Activated CD4-positive, alpha-beta memory T cell treated with anti-CD3 and anti-CD28 coated beads, Interleukin-2, amount 10 ng/mL, durations not matched to agents 7 days and 5 days (primary cell): ENCODE measurements at regions of chr10 and their contacts with region 1.

Region 1: GRCh38 chr10:86971232-86971991 is 3.1 kb downstream of the ADIRF start:
- DNase-seq: peak; percentile 88
- H3K4me3 Mint-ChIP-seq: peak overlapping the region; percentile 72
- H3K27ac Mint-ChIP-seq: peak overlapping the region; percentile 52
- H3K4me1 Mint-ChIP-seq: peaks cover 35% of the 10 kb centered on the region
- H3K27me3 Mint-ChIP-seq: peaks cover 35% of the 10 kb centered on the region

Region 2: DNA sequence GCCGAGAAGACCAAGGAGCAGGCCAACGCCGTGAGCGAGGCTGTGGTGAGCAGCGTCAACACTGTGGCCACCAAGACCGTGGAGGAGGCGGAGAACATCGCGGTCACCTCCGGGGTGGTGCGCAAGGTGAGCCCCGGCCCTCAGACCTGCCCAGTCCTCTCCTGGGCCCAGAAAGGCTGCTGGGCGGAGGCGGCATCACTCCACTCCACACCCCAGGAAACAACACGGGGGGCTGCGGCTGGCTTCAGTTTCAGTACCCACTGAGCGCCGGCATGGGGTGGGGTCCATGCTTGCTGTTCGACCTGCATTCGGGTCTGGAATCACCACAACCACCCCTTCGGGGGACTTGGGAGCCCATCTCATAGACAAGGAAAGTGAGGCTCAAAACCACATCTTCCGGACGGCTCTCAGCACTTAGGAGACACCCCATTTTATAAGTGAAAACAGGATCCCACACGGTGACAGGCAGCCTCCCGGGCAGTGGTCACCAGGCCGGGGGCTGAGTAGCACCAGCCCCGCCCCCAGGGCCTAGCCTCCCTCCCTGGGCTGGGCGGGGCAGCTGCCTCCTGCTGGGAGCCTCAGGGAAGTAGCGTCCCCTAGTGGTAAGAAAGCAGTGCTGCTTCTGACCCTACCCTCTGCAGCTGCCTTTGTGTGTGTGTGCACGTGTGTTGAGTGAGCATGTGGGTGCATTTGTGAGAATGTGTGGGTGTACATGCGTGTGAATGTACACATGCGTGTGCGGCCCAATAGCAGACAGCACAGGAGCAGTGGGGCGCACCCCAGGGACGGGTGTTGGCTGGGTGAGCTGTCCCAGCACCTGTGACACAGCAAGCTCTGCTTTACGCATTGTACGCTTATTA is 11.2 kb before region 1 on chr10:
- CTCF ChIA-PET with region 1: interaction called, 12 read pairs
- POLR2A ChIA-PET with region 1: interaction called, 7 read pairs
- DNase-seq: peak; percentile 62
- H3K4me3 Mint-ChIP-seq: no peak overlapping the region
- H3K27ac Mint-ChIP-seq: no peak overlapping the region
- H3K4me1 Mint-ChIP-seq: peaks cover 3% of the 10 kb centered on the region
- H3K27me3 Mint-ChIP-seq: no peaks in the 10 kb centered on the region

Region 3: DNA sequence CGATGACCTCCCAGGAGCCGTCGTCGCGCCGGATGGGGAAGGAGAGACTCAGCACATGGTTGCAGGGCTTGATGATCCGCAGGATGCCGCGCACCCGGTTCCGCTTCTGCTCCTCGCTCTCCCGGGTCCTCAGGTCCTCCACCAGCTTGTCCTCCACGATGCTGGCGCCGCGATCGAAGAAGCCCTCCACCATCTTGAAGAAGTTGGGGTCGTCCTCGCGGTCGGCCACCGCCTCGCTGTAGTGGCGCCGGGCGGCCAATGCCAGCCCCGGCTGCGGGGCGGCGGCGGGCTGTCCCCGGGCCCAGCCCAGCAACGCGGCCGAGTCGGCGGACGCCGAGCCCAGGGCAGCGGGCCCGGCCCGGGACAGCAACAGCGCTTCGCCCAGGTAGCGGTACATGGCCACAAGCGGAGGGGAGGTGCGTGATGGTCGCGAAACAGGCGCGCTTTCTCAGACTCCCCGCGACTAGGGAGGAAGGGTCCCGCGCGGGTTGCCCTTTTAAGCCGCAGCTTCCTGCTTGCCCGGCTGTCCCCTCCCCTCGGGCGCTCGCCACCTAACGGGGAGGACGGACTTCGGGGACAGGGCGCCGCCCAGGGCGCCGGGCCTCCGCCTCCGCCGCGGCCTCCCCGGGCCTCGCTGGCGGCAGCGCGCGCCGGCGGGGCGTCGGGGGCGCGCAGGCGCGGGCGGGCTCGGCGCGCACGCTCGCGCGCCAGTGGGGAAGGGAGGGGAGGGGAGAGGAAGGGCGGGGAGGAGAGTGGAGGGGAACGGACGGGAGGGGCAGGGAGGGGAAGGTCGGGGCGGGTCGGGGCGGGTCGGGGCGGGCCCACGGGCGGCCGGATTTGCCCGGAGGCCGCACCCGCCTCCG is 123.2 kb after region 1 on chr10 and contains the starts of genes GLUD1 and SHLD2:
- CTCF ChIA-PET with region 1: interaction called, 4 read pairs
- POLR2A ChIA-PET with region 1: interaction called, 24 read pairs
- DNase-seq: peak; percentile 94
- H3K4me3 Mint-ChIP-seq: peak within 1 kb of the TSS; percentile 98
- H3K27ac Mint-ChIP-seq: peak within 1 kb of the TSS; percentile 97
- H3K4me1 Mint-ChIP-seq: peaks cover 44% of the 10 kb centered on the region
- H3K27me3 Mint-ChIP-seq: no peaks in the 10 kb centered on the region
- total RNA-seq, gene GLUD1: 111 to 121 TPM
- total RNA-seq, gene SHLD2: 31.0 to 31.4 TPM